ENCODE measurements at regions of chr2 and their contacts with region 1.

Region 1: DNA sequence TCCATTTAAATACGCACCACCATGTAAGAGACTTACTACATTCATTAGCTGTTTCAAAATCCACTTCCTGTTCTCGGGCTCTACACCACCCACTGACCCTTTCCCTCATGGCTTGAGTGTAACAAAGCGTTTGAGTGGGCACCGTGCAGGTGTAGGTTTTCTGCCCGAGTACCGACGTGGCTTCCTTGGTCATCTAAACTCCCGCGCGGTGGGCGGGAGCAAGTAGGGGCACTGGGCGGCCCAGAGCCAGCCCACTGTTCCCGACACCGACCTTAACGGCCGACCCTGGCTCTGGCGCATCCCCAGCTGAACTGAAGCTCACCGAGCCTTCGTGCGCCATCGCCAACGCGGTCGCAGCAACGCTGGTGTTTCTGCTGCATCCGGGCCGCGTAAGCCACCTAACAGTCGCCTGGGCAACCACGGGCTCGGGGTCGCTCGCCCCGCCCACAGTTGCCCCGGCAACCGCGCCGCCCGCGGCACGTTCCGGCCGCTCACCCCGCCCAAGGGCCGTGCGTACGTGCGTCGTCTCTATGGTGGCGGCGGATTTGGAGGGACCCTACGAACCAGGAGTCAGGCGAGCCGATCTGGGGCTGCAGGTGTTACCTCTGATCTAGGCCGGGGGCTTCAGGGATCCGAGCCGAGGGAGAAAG is at the starts of genes C2orf81 and WDR54:
- DNase-seq: peak; percentile 97
- ATAC-seq: peak; percentile 88
- H3K4me3 Mint-ChIP-seq: peak within 1 kb of the TSS; percentile 99
- H3K27ac Mint-ChIP-seq: peak within 1 kb of the TSS; percentile 96
- H3K4me1 Mint-ChIP-seq: peaks cover 44% of the 10 kb centered on the region
- H3K27me3 Mint-ChIP-seq: no peaks in the 10 kb centered on the region
- CTCF ChIP-seq: no peak
- total RNA-seq, gene C2orf81: 3.9 and 5.5 TPM in 2 replicates
- total RNA-seq, gene WDR54: 32.3 and 33.5 TPM in 2 replicates

Region 2: DNA sequence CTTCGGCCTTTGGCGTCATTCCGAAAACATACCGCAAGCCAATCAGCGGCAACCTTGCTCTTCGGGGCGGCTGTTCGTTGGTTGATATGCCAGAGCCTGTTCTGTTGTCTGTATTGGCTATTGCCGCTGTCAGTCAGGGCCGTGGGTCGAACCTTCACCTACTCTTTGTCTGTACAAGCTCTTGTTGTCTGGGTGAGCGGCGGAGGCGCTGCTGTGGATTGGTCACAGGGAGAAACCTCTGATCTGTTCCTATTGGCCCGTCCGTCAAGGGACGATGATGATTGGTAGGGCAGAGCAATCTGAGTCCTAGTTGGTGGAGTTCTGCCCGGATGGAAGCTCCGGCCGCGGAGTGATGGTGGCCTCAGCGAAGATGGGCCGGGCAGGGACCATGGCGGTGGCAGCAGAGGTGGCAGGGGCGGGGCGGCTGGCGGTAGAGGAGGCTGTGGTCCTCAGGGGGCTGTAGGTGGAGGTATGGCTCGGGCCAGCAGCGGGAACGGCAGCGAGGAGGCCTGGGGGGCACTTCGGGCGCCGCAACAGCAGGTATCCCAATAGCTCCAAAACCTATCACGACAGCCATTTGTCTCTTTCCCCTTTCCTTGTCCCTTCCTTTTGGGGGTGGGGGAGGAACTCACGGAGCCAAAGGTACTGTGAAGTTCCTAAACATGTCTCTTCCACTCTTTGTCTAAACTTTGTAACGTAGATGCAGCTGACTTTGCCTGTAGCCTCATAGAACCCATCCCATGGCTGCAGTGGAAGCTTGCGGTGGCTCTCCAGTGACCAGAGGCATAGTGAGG is 37.0 kb after region 1 on chr2 and contains the start of gene WBP1:
- CTCF ChIA-PET with region 1: interaction called, 3 read pairs
- POLR2A ChIA-PET with region 1: interaction called, 35 read pairs
- intact Hi-C with region 1: loop called (anchors 1 kb)
- DNase-seq: peak; percentile 87
- ATAC-seq: peak; percentile 81
- H3K4me3 Mint-ChIP-seq: peak within 1 kb of the TSS; percentile 99
- H3K27ac Mint-ChIP-seq: peak within 1 kb of the TSS; percentile 100
- H3K4me1 Mint-ChIP-seq: peaks cover 62% of the 10 kb centered on the region
- H3K27me3 Mint-ChIP-seq: no peaks in the 10 kb centered on the region
- CTCF ChIP-seq: no peak
- total RNA-seq, gene WBP1: 61.4 and 65.3 TPM in 2 replicates

Region 3: DNA sequence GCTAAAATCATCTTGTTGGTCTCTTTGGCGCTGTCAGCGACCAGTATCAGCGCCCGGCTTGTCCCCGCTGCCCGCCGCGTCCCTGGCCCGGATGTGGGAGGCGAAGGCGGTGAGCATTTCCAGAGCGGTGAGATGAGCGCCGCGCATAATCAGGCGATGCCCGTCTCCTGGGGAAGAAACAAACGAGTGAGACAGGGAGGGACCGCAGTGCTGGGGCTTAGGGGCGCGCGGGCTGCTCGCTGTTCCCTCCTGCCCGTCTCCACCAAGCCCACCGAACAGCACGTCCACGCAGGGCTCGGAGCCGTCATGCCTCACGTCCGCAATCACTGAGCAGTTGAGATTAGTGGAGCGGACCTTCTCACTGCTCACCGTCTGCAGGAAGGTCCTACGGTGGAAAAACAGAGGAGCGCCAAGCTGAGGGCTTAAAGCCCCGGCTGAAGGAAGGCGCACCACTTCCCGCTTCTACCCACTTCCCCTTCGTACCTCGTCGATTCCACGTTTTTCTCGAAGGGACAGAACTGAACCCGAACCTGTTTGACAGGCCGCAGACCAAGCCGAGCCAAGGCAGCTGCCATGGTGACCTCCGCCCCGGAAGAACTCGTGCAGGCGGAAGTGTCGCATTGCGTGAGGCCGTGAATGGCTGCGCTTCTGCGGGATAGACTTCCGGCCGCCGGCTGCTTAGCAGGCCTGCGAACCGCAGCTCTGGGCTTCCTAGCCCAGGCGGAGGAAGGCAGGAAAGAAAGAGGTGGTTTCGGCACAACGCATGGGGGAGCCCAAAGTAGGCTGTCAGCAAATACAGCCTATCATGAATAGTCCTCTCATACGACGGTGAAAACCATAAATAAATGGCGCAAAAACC is 51.0 kb after region 1 on chr2 and contains the start of gene MRPL53:
- CTCF ChIA-PET with region 1: no interaction called
- POLR2A ChIA-PET with region 1: interaction called, 4 read pairs
- intact Hi-C with region 1: loop called (anchors 5 kb)
- DNase-seq: peak; percentile 91
- ATAC-seq: peak; percentile 89
- H3K4me3 Mint-ChIP-seq: peak within 1 kb of the TSS; percentile 97
- H3K27ac Mint-ChIP-seq: peak within 1 kb of the TSS; percentile 97
- H3K4me1 Mint-ChIP-seq: peaks cover 23% of the 10 kb centered on the region
- H3K27me3 Mint-ChIP-seq: no peaks in the 10 kb centered on the region
- CTCF ChIP-seq: no peak
- total RNA-seq, gene MRPL53: 86.9 and 98.8 TPM in 2 replicates

Region 4: DNA sequence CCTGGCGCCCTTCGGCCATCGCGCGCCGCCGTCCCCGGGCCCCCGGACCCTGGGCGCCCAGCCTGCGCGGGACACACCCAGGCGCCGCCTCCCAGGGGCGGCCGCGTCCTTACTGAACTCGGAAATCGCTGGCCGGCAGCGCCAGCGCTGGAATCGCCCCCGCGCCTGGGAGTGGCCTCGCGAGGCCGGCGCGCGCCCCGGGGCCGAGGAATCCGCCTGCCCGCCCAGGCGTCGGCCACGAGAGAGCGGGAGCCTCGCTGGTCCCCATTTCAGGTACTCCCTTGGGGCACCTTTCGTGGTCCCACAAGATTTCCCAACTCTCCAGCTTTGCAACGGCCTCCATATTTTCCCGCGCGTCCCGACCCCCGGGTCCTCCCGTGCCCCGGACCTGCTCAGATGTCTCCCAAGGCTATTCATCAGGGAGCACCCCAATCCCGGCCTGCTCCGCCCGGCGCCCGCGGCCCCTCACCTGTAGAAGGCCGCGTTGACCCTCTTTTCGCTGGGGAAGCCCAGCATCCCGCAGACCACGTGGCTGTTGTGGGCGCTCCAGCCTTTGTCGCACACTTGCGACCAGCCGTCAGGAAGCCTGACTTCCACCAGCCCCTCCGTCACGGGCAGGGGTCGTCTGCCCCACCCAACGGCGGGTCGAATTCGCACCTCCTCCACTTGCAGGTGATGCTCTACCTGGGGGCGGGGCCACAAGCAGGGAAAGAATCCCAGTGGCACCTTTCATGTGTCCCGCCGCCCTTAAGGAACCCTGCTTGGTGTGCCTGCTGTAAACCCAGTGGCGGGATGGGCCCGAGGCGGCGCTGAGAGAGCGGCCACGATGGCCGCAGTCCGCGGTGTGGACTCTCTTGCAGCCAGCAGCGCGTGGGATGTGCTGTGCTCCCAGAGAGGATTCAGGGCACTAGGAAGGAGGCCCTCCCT is 127.8 kb after region 1 on chr2:
- CTCF ChIA-PET with region 1: no interaction called
- POLR2A ChIA-PET with region 1: no interaction called
- intact Hi-C with region 1: no loop called
- DNase-seq: no peak
- ATAC-seq: peak; percentile 50
- H3K4me3 Mint-ChIP-seq: peak overlapping the region; percentile 80
- H3K27ac Mint-ChIP-seq: no peak overlapping the region
- H3K4me1 Mint-ChIP-seq: peaks cover 27% of the 10 kb centered on the region
- H3K27me3 Mint-ChIP-seq: peaks cover 19% of the 10 kb centered on the region
- CTCF ChIP-seq: no peak

Region 5: GRCh38 chr2:74690571-74690970 is 269.2 kb after region 1 on chr2:
- CTCF ChIA-PET with region 1: no interaction called
- POLR2A ChIA-PET with region 1: no interaction called
- intact Hi-C with region 1: no loop called
- DNase-seq: no peak
- ATAC-seq: peak; percentile 50
- H3K4me3 Mint-ChIP-seq: no peak overlapping the region
- H3K27ac Mint-ChIP-seq: no peak overlapping the region
- H3K4me1 Mint-ChIP-seq: no peaks in the 10 kb centered on the region
- H3K27me3 Mint-ChIP-seq: peaks cover 6% of the 10 kb centered on the region
- CTCF ChIP-seq: peak; percentile 5